Calu3 (cell line): ENCODE measurements at regions of chr2 and their contacts with region 1.

Region 1: GRCh38 chr2:220165401-220165800 is 538.0 kb downstream of the SLC4A3 start:
- DNase-seq: peak; percentile 58
- H3K4me3 Mint-ChIP-seq: no peak overlapping the region
- H3K27ac Mint-ChIP-seq: no peak overlapping the region
- H3K4me1 Mint-ChIP-seq: peaks cover 8% of the 10 kb centered on the region
- H3K27me3 Mint-ChIP-seq: no peaks in the 10 kb centered on the region
- CTCF ChIP-seq: peak; percentile 36

Region 2: DNA sequence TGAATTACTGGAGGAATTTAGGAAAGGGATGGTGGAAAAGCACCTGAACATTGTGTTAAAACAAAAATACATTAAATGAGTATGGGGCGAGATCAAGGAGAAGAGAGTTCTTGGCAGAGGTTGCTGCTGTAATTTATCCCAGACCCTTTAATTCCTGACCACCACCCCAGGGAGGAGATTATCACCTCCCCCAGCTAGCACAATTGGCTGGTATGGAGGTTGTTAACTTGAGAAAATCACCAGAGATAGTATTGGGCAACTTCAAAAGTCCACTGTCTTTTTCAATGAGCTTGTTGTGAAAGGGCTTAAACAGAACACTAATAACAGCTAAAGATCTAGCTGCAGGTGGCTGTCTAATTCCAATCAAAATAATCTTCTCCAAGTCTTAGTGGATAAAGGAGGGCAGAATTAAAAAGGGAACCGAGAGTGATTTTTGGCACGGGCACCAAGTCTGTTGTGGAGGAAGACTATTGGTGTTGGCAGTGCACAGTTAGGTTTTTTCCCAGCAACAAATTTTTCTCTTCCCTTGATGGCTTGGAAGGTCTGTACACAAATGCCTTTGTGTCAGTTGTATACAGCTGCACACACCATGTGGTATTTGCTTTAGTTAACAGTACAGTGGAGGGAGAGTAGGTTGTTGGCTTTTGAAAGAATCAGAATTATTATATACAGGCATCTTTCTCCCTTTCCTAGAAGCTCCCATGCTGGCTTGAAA is 248.5 kb before region 1 on chr2:
- CTCF ChIA-PET with region 1: no interaction called
- intact Hi-C with region 1: no loop called
- DNase-seq: no peak
- H3K4me3 Mint-ChIP-seq: no peak overlapping the region
- H3K27ac Mint-ChIP-seq: no peak overlapping the region
- H3K4me1 Mint-ChIP-seq: no peaks in the 10 kb centered on the region
- H3K27me3 Mint-ChIP-seq: peaks cover 9% of the 10 kb centered on the region
- CTCF ChIP-seq: no peak

Region 3: DNA sequence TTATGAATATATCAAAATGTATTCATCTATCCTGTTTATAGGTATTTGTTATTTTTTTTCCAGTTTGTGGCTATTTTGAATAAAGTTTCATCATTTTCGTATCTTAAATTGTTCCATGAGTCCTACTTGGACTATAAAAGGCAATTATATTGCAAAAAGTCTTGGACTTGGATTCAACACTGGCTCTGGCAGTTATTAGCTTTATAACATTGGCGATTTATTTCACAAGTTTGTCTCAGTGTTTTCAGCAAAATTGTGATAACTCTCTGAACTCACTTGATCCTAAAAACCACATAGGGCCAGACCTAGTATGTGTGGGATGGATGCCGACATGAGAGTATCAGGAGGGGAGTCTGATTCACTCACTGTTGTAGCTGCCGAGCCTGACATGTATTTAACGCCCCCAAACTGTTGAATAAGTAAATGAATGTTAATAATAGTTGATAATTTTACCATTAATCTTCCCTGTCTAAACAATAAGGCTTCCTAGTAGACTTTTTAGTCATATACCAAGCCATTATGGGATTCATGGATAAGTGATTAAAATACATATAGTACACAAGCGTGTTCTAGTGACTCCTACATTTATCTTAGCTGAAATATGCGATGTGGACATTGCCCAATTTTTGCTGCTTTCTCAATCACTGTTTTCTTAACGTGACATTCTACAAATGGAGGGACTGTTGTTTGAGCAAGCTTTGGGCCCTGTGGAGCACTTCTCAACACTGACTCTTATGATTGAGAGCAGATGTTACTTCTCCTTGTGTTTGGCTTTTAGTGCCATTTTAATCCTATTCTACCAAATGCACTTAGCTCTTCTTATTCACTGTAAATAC is 499.1 kb after region 1 on chr2:
- CTCF ChIA-PET with region 1: no interaction called
- intact Hi-C with region 1: loop called (anchors 5 kb)
- DNase-seq: no peak
- H3K4me3 Mint-ChIP-seq: no peak overlapping the region
- H3K27ac Mint-ChIP-seq: no peak overlapping the region
- H3K4me1 Mint-ChIP-seq: peaks cover 16% of the 10 kb centered on the region
- H3K27me3 Mint-ChIP-seq: no peaks in the 10 kb centered on the region
- CTCF ChIP-seq: no peak